ENCODE measurements at regions of chr9 and their contacts with region 1.

Region 1: GRCh38 chr9:133485361-133486260 is 6.7 kb upstream of the SLC2A6 start:
- DNase-seq: no peak
- H3K4me3 Mint-ChIP-seq: no peak overlapping the region
- H3K27ac Mint-ChIP-seq: no peak overlapping the region
- H3K4me1 Mint-ChIP-seq: peaks cover 3% of the 10 kb centered on the region
- H3K27me3 Mint-ChIP-seq: no peaks in the 10 kb centered on the region

Region 2: DNA sequence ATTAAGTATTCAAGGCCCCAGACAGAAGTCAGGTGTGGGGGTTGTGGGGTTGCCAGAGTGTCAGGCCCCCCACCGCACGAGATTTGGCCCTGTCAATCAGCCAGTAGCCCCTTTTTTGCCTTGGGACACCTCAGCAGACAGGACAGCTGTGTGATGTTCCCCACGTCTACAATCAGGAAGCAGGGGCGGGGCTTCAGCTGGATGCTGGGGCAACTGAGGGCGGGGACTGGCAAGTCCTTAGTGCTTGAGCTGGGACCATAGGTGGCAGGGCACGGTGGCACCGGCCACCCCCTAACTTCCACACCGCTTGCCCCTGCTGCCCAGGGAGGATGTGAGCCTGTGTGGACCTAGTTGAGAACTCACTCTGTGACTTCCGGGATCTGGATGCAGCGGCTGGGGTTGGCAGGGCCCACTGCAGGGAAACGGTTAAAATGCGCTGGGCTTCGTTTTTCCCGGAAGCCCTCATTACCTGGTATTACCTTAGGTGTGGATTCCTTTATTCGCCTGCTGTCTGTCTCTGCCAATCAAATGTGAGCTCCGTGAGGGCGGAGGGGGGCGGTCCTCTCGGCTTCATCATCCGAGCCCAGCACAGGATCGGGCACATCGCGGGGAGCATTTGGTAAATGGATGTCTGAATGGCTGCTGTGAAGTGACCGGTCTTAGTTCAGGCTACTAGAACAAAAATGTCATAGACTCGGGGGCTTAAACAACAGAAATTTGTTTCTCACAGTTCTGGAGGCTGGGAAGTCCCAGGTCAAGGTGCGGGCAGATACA is 462.3 kb before region 1 on chr9:
- CTCF ChIA-PET with region 1: no interaction called
- intact Hi-C with region 1: loop called (anchors 1 kb)
- DNase-seq: peak; percentile 70
- H3K4me3 Mint-ChIP-seq: no peak overlapping the region
- H3K27ac Mint-ChIP-seq: no peak overlapping the region
- H3K4me1 Mint-ChIP-seq: peaks cover 15% of the 10 kb centered on the region
- H3K27me3 Mint-ChIP-seq: no peaks in the 10 kb centered on the region

Region 3: DNA sequence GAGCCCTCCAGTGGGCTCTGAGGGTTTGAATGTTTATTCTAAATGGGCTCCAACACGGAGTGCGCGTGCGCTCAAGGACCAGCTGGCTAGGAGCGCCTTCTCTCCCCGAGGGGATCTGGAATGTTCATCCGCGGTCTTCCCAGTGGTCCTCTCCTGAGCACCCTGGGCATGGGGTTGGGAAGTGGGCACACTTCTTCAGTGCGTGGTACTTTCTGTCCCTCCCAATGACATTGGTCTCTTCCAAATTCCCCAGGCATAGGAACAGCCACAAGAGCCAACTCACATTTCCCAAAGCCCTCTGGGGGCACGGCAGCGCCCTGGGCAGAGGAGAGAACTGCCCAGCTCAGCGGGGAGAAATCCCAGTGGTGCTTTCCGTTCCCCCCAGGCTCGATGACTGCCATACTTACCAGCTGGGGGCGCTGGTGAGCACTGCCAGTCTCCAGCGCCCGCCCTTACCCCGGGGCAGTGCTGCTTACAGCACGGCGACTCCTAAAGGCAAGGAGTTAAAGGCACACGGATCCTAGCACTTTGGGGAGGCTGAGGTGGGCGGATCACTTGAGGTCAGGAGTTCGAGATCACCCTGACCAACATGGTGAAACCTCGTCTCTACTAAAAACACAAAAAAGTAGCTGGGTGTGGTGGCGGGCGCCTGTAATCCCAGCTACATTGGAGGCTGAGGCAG is 246.6 kb before region 1 on chr9:
- CTCF ChIA-PET with region 1: interaction called, 4 read pairs
- intact Hi-C with region 1: loop called (anchors 2 kb)
- DNase-seq: peak; percentile 83
- H3K4me3 Mint-ChIP-seq: peak overlapping the region; percentile 44
- H3K27ac Mint-ChIP-seq: no peak overlapping the region
- H3K4me1 Mint-ChIP-seq: peaks cover 7% of the 10 kb centered on the region
- H3K27me3 Mint-ChIP-seq: peaks cover 21% of the 10 kb centered on the region

Region 4: DNA sequence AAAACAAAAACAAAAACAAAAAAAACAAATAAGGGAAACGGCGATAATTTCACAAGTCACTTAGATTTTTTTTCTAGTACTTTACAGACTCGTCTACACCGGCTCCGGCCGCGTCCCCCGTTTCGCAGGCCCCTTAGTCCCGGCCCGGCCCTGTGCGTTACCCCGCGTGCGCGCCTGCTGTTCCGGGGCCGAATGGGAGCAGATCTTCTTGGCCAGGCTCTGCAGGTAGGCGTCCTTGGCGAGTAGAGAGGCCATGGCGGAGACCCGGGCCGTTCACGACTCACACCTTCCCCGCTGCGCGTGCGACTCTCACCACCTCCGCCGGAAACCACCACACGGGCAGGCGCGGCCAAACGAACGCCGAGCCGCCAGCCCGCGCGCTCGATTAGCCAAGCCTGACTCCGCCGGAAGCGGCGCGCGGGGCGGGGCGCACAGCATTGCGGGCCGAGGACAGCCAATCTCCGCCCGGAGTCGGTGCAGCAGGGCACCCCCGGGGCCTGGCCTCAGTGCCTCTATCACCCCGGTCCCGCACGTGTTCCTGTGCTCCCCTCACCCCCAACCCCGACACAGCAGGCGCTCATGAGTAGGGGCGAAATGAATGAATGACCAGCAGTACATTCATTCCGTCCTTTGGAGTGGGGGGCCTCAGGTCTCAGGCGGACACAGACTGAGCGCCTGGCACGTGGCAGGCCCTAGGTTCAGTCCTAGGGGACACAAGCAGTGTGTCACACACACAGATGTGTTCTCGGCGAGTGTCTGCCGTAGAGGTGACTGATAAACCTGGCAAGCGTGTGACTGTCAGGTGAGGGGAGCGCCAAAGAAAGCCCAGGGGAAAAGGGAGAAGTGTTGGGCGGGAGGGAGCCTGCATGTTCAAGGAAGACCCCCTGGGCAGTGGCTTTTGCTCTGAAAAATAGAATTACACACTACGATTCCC is 149.5 kb before region 1 on chr9 and contains the start of gene SURF6:
- CTCF ChIA-PET with region 1: no interaction called
- intact Hi-C with region 1: loop called (anchors 5 kb)
- DNase-seq: peak; percentile 95
- H3K4me3 Mint-ChIP-seq: peak within 1 kb of the TSS; percentile 97
- H3K27ac Mint-ChIP-seq: peak within 1 kb of the TSS; percentile 87
- H3K4me1 Mint-ChIP-seq: peaks cover 40% of the 10 kb centered on the region
- H3K27me3 Mint-ChIP-seq: no peaks in the 10 kb centered on the region
- total RNA-seq, gene SURF6: 13.6 to 13.8 TPM

Region 5: DNA sequence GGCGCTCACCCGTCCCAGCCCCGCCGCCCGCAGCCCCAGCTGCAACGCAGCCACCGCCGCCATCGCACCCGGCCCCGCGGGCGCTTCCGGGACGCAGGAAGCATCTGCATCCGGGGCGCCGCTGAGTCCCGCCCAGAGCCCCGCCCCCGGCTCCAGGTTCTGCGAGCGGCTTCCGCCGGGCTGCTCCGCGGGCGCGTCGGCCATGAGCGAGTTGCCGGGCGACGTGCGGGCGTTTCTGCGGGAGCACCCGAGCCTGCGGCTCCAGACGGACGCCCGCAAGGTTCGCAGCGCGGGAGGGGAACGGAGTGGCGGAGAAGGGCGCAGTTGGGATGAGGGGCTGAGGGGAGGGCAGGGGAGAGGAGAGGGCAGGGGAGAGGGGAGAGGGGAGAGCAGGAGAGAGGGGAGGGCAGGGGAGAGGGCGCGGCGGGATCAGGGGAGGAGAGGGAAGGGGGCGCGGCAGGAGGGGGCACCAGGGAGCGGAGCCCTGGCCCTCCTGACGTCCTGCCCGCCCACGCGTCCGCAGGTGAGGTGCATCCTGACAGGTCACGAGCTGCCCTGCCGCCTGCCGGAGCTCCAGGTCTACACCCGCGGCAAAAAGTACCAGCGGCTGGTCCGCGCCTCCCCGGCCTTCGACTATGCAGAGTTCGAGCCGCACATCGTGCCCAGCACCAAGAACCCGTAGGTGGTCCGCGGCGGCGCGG is 129.1 kb before region 1 on chr9 and contains the starts of genes SURF1 and SURF2:
- CTCF ChIA-PET with region 1: interaction called, 3 read pairs
- intact Hi-C with region 1: loop called (anchors 5 kb)
- DNase-seq: peak; percentile 92
- H3K4me3 Mint-ChIP-seq: peak within 1 kb of the TSS; percentile 82
- H3K27ac Mint-ChIP-seq: peak within 1 kb of the TSS; percentile 81
- H3K4me1 Mint-ChIP-seq: peaks cover 50% of the 10 kb centered on the region
- H3K27me3 Mint-ChIP-seq: no peaks in the 10 kb centered on the region
- total RNA-seq, gene SURF1: 24.9 to 27.8 TPM
- total RNA-seq, gene SURF2: 15.0 to 16.2 TPM

Region 6: GRCh38 chr9:133406480-133407307 is 78.9 kb before region 1 on chr9:
- CTCF ChIA-PET with region 1: interaction called, 4 read pairs
- intact Hi-C with region 1: loop called (anchors 1 kb)
- DNase-seq: peak; percentile 84
- H3K4me3 Mint-ChIP-seq: no peak overlapping the region
- H3K27ac Mint-ChIP-seq: peak overlapping the region; percentile 39
- H3K4me1 Mint-ChIP-seq: peaks cover 10% of the 10 kb centered on the region
- H3K27me3 Mint-ChIP-seq: no peaks in the 10 kb centered on the region

Region 7: DNA sequence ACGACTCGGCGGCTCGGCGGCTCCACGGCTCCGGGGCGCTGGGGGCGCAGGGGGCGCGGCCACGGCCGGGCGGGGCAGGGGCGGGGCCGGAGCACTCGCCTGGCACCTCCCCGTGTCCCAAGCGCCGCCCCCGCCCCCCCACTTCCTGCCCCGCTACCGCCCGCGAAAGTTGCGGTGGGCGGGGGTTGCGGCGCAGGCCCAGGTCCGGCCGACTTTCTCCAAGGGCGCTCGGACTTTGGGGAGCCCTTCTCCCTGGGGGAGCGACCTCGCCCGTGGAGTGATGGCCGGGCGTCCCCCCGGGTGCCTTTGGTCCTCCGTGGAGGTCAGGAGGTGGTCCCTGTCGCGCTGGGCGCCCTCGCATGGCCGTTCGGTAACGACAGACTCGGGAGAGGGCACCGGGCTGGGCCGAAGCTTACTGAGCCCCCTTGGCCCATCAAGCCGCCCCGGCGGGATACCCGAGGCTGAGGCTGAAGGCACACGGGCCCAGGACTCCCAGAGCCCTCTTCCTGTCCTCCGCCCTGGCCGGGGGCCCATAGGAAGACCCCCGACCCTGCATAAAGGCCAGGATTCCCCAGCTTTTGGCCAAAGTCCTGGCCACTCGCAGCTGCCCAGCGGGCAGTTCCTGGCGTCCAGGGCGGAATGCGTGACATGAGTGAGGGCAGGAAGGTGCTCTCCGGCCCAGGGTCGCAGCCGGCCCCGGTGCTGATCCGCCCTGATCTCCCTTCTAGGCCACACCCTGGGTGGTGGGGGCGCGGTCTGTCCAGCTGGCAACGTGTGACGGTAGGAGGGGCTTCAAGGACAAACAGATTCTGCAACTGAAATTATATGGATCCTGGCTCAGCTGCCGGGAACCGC is 507.4 kb after region 1 on chr9:
- CTCF ChIA-PET with region 1: no interaction called
- intact Hi-C with region 1: no loop called
- DNase-seq: peak; percentile 74
- H3K4me3 Mint-ChIP-seq: peak overlapping the region; percentile 60
- H3K27ac Mint-ChIP-seq: no peak overlapping the region
- H3K4me1 Mint-ChIP-seq: peaks cover 2% of the 10 kb centered on the region
- H3K27me3 Mint-ChIP-seq: peaks cover 3% of the 10 kb centered on the region